GM23248 (cell line): ENCODE measurements at regions of chr20 and their contacts with region 1.

Region 1: GRCh38 chr20:9989066-9989724 is 45.6 kb upstream of the ANKEF1 start:
- DNase-seq: peak; percentile 75
- H3K4me3 ChIP-seq: no peak overlapping the region
- H3K27ac ChIP-seq: no peak overlapping the region
- H3K4me1 ChIP-seq: peaks cover 13% of the 10 kb centered on the region
- H3K27me3 ChIP-seq: no peaks in the 10 kb centered on the region; the same call in 1 of the 2 replicates

Region 2: DNA sequence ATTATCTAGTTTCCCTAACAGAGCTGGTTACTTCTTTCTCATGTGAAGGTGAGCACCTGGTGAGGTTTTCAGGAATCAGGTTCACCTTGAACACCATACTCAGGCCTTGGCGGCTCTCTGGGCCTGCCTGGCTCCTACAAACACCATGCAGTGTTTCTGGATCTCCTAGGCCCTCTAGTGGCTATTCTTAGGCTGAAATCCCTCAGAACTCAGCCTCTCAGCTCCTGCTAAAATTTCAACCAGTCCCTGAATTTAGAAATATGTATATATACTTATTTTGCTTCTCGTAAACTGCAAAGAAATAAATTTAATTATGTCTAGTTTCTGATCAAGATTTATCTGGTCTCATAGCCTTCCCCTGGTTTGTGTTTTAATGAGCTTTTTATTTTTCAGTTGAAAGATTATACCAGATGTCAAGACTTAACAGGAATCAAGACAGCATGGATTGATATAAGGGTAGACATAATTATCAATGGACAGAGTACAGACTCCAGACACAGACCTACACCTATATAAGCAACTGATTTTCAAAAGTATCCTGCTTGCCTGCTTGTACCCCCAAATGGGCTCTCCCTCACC is 101.5 kb after region 1 on chr20:
- in situ Hi-C with region 1: loop called (anchors 10 kb)
- DNase-seq: peak; percentile 75
- H3K4me3 ChIP-seq: no peak overlapping the region
- H3K27ac ChIP-seq: no peak overlapping the region
- H3K4me1 ChIP-seq: peaks cover 12% of the 10 kb centered on the region
- H3K27me3 ChIP-seq: no peaks in the 10 kb centered on the region